MCF 10A (cell line): ENCODE measurements at regions of chr11 and their contacts with region 1.

Region 1: DNA sequence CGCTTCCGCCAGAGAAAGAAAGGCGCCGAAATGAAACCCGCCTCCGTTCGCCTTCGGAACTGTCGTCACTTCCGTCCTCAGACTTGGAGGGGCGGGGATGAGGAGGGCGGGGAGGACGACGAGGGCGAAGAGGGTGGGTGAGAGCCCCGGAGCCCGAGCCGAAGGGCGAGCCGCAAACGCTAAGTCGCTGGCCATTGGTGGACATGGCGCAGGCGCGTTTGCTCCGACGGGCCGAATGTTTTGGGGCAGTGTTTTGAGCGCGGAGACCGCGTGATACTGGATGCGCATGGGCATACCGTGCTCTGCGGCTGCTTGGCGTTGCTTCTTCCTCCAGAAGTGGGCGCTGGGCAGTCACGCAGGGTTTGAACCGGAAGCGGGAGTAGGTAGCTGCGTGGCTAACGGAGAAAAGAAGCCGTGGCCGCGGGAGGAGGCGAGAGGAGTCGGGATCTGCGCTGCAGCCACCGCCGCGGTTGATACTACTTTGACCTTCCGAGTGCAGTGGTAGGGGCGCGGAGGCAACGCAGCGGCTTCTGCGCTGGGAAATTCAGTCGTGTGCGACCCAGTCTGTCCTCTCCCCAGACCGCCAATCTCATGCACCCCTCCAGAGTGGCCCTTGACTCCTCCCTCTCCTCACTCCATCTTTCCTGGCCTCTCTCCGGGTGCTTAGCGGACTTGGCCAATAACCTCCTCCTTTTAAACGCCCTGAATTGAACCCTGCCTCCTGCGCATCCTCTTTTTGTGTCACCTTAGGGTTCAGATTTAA is at the start of gene ATM:
- DNase-seq: peak; percentile 98
- H3K4me3 Mint-ChIP-seq: no peak within 1 kb of the TSS
- H3K27ac Mint-ChIP-seq: no peak within 1 kb of the TSS
- H3K4me1 Mint-ChIP-seq: peaks cover 37% of the 10 kb centered on the region
- H3K27me3 Mint-ChIP-seq: no peaks in the 10 kb centered on the region
- CTCF ChIP-seq: peak; percentile 57
- total RNA-seq, gene ATM: 70.6 and 73.6 TPM in 2 replicates

Region 2: GRCh38 chr11:108008656-108009496 is 214.0 kb before region 1 on chr11 and contains the start of gene CUL5:
- CTCF ChIA-PET with region 1: no interaction called
- POLR2A ChIA-PET with region 1: interaction called, 13 read pairs
- intact Hi-C with region 1: no loop called
- DNase-seq: peak; percentile 90
- H3K4me3 Mint-ChIP-seq: peak within 1 kb of the TSS; percentile 86
- H3K27ac Mint-ChIP-seq: peak within 1 kb of the TSS; percentile 98
- H3K4me1 Mint-ChIP-seq: peaks cover 17% of the 10 kb centered on the region
- H3K27me3 Mint-ChIP-seq: no peaks in the 10 kb centered on the region
- CTCF ChIP-seq: peak; percentile 84
- total RNA-seq, gene CUL5: 31.8 and 37.5 TPM in 2 replicates

Region 3: DNA sequence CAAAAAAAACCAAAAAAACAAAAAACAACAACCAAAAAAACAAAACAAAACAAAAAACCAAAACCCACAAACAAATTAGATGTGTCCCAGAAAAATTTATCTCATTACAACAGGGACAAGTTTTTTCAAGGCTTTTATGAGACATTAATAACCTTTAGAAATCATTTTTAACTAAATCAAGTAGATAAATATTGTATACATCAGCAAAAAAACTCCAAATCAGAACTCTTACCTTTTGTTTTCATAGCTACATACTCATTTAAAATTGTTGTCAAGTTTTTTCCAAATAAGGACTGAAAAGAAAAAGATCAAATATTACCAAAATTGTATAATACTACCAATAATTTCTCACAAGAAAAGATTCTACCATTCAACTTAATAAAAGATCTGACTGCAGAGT is 29.1 kb before region 1 on chr11:
- CTCF ChIA-PET with region 1: no interaction called
- POLR2A ChIA-PET with region 1: interaction called, 25 read pairs
- intact Hi-C with region 1: no loop called
- DNase-seq: no peak
- H3K4me3 Mint-ChIP-seq: no peak overlapping the region
- H3K27ac Mint-ChIP-seq: no peak overlapping the region
- H3K4me1 Mint-ChIP-seq: peaks cover 3% of the 10 kb centered on the region
- H3K27me3 Mint-ChIP-seq: no peaks in the 10 kb centered on the region
- CTCF ChIP-seq: no peak

Region 4: GRCh38 chr11:108237058-108237481 is 14.2 kb after region 1 on chr11:
- CTCF ChIA-PET with region 1: interaction called, 6 read pairs
- POLR2A ChIA-PET with region 1: interaction called, 23 read pairs
- intact Hi-C with region 1: no loop called
- DNase-seq: no peak
- H3K4me3 Mint-ChIP-seq: no peak overlapping the region
- H3K27ac Mint-ChIP-seq: peak overlapping the region; percentile 6
- H3K4me1 Mint-ChIP-seq: peaks cover 7% of the 10 kb centered on the region
- H3K27me3 Mint-ChIP-seq: no peaks in the 10 kb centered on the region
- CTCF ChIP-seq: no peak

Region 5: DNA sequence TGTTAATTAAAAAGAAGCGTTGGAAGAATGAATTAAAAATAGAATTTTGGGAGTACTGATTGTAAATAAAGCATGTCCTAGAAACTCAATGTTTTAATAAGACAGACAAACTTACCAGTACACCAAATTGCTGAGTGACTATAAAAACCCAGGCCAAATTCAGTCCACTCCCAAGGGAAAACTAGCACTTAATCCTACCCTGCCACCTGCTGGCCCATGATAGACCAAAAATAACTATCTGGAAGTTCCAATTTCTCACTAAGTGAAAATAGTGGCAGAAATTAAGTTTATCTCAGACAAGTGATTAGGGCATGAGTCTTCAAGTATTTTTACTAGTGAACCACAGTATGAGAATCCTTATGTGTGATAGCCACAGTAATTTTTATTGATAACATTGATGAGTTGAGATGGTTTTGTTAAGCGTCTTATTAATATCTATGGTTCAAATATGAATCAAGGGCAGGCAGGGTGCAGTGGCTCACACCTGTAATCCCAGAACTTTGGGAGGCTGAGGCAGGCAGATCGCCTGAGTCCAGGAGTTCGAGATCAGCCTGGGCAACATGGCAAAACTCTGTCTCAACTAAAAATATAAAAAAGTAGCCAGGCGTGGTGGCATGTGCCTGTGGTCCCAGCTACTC is 432.2 kb after region 1 on chr11:
- CTCF ChIA-PET with region 1: no interaction called
- POLR2A ChIA-PET with region 1: interaction called, 10 read pairs
- intact Hi-C with region 1: loop called (anchors 2 kb)
- DNase-seq: peak; percentile 74
- H3K4me3 Mint-ChIP-seq: no peak overlapping the region
- H3K27ac Mint-ChIP-seq: no peak overlapping the region
- H3K4me1 Mint-ChIP-seq: no peaks in the 10 kb centered on the region
- H3K27me3 Mint-ChIP-seq: no peaks in the 10 kb centered on the region
- CTCF ChIP-seq: peak; percentile 79